H1 (cell line): ENCODE measurements at regions of chr2 and their contacts with region 1.

Region 1: DNA sequence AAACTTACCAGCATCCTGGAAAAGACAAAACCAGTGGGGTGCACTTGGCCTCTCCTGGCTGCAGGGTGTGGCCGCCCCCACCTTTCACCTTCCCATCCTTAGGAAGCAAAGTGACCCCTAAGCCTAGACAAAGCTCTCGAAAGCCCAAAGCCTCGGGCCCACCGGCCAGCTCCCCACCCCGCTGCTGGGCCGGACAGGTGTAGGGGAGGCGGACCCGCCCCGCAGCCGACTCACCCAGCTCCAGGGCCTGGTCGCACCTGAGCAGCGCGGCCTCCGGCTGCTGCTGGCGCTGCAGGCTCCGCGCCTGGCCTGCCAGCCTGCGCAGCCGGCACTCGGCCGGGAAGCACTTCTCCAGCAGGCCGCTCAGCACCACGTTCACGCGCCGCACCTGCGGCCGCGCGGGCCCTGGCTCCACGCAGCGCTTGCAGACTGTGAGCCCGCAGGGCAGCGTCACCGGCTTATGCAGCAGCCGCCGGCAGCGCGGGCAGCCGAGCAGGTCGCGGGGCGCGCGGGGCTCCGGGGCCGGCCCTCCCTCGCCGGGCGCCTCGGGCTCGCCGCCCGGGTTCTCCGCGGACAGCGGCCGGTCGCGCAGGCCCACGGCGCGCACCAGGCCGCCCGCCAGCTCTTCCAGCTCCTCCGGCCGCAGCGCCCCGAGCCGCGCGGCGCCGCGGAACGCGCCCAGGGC is 978 bp downstream of the LONRF2 start:
- DNase-seq: peak in 1 of 2 experiments; percentile 78
- H3K4me3 ChIP-seq: peak overlapping the region; percentile 33 to 66 (median 48)
- H3K27ac ChIP-seq: no peak overlapping the region
- H3K4me1 ChIP-seq: peaks cover 0 to 3% (median 0%) of the 10 kb centered on the region in 4 experiments; a peak in 2 of 7 replicates
- H3K27me3 ChIP-seq: peaks cover 14 to 46% (median 33%) of the 10 kb centered on the region in 4 experiments
- CTCF ChIP-seq: peak; percentile 31 to 57 (median 53); a peak in 3 of 4 replicates
- EP300 ChIP-seq: no peak
- POLR2A ChIP-seq: no peak
- RAD21 ChIP-seq: peak; percentile 17 to 36; a peak in 2 of 4 replicates

Region 2: DNA sequence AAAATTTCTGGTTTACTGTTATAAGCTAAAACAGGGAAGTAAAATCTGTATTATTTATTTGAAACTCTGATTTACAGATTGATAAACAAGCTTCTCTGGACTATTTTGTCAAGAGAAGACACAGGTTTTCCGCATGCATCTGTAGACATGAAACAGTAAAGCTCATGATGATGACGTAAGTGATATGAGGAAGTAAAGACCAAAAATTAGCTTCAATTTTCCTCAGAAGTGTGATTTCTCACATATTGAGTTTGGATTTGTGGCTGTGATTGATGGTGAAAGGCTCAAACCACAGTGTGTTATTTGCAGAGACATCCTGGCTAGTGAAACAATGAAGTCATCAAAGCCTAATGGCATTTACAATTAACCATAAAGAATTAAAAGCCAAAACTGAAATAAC is 13.6 kb after region 1 on chr2:
- CTCF ChIA-PET with region 1: interaction called, 11 read pairs
- POLR2A ChIA-PET with region 1: no interaction called
- DNase-seq: no peak
- H3K4me3 ChIP-seq: no peak overlapping the region
- H3K27ac ChIP-seq: no peak overlapping the region
- H3K4me1 ChIP-seq: no peaks in the 10 kb centered on the region; a peak in 1 of 7 replicates
- H3K27me3 ChIP-seq: no peaks in the 10 kb centered on the region
- CTCF ChIP-seq: no peak
- EP300 ChIP-seq: no peak
- POLR2A ChIP-seq: no peak
- RAD21 ChIP-seq: no peak